OCI-LY7 (cell line): ENCODE measurements at regions of chr1 and their contacts with region 1.

Region 1: GRCh38 chr1:37682334-37682987 is 9.9 kb upstream of the CDCA8 start:
- DNase-seq: peak; percentile 81
- H3K4me3 ChIP-seq: no peak overlapping the region
- H3K27ac ChIP-seq: peak overlapping the region; percentile 2
- H3K4me1 ChIP-seq: peaks cover 25% of the 10 kb centered on the region
- CTCF ChIP-seq: peak; percentile 98

Region 2: DNA sequence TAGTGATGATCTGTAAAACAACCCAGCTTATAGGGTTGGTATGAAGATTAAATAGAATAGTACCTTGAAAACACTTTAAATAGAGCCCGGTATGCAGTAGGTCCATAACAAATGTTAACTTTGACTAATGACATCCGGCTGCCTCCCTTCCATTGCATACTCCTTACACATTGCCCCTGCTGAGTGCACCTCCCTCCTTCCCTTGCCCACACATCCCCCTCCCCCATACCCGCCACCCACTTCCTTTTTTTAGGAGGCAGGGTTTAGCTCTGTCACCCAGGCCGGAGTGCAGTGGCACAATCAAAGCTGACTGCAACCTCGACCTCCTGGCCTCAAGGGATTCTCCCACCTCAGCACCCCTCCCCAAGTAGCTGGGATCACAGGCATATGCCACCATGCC is 232.5 kb before region 1 on chr1:
- CTCF ChIA-PET with region 1: no interaction called
- POLR2A ChIA-PET with region 1: no interaction called
- intact Hi-C with region 1: loop called (anchors 2 kb)
- DNase-seq: peak; percentile 68
- H3K4me3 ChIP-seq: no peak overlapping the region
- H3K27ac ChIP-seq: no peak overlapping the region
- H3K4me1 ChIP-seq: peaks cover 20% of the 10 kb centered on the region
- CTCF ChIP-seq: no peak

Region 3: DNA sequence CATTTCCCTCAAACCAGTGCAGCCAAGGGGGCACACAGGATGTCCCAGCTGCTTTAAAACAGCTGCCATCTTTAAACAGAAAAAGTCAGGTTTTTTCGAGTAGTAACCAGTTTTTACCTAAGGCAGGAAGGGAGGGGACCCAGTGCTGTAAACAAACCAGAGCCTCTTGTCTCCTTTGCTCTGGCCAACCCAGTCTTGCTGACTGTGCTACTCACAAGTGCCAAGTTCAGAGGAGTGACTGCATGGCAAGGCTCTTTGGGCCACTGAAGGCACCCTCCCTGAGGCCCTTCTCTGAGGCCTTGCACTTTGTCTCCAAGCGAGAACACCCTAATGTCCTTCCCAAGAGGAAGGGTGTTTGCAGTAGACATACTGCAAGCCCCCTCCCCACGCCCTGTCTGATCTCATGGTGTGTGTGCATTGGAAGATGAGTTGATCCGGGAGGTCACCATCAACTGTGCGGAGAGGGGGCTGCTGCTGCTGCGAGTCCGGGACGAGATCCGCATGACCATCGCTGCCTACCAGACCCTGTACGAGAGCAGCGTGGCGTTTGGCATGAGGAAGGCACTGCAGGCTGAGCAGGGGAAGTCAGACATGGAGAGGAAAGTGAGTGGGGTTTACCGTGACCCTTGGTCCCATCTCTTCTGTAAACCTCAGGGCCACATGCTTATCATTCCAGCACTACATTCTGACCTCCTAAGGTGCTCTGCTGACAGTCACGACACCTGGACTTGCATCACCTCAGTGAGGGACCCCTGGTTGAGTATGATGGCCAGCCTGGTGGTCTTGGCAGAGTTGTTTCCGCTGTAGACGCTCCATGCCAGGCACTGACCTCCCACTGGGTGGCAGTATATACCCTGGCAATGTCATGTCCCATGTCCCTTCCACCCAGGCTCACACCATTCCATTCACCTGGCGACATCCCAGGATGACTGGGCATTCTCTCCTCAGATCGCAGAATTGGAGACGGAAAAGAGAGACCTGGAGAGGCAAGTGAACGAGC is 121.0 kb before region 1 on chr1:
- CTCF ChIA-PET with region 1: no interaction called
- POLR2A ChIA-PET with region 1: interaction called, 3 read pairs
- intact Hi-C with region 1: loop called (anchors 1 kb)
- DNase-seq: peak; percentile 64
- H3K4me3 ChIP-seq: no peak overlapping the region
- H3K27ac ChIP-seq: no peak overlapping the region
- H3K4me1 ChIP-seq: no peaks in the 10 kb centered on the region
- CTCF ChIP-seq: peak; percentile 88

Region 4: GRCh38 chr1:37588939-37589338 is 93.5 kb before region 1 on chr1:
- CTCF ChIA-PET with region 1: no interaction called
- POLR2A ChIA-PET with region 1: no interaction called
- intact Hi-C with region 1: no loop called
- DNase-seq: no peak
- H3K4me3 ChIP-seq: no peak overlapping the region
- H3K27ac ChIP-seq: no peak overlapping the region
- H3K4me1 ChIP-seq: peaks cover 7% of the 10 kb centered on the region
- CTCF ChIP-seq: no peak

Region 5: GRCh38 chr1:37602750-37603694 is 79.4 kb before region 1 on chr1:
- CTCF ChIA-PET with region 1: interaction called, 9 read pairs
- POLR2A ChIA-PET with region 1: interaction called, 5 read pairs
- intact Hi-C with region 1: loop called (anchors 1 kb)
- DNase-seq: peak; percentile 76
- H3K4me3 ChIP-seq: no peak overlapping the region
- H3K27ac ChIP-seq: no peak overlapping the region
- H3K4me1 ChIP-seq: peaks cover 4% of the 10 kb centered on the region
- CTCF ChIP-seq: peak; percentile 95